ENCODE measurements at regions of chr18 and their contacts with region 1.

Region 1: GRCh38 chr18:65398347-65399075 is 352.3 kb upstream of the CDH7 start:
- DNase-seq: no peak
- ATAC-seq: no peak
- H3K4me3 ChIP-seq: no peak overlapping the region
- H3K27ac ChIP-seq: no peak overlapping the region
- H3K4me1 ChIP-seq: no peaks in the 10 kb centered on the region
- H3K27me3 ChIP-seq: no peaks in the 10 kb centered on the region
- CTCF ChIP-seq: no peak
- POLR2A ChIP-seq: no peak

Region 2: DNA sequence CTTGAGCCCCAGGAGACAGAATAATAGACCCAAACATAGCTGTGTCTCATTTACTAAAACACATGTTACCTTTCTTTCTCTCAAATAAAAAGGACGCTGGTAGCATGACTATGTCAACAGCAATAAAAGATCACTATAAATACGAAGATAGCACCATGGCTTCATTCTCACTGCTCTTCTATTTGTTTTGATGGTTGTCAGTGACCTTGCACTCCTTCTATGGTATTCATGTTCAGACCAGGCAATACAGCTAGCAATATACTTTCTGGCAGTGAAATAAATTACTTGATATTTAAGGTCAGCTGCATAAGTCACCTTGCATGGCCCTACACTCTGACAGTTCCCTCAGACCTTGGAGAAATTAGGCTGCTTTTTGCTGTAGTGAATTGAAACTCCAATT is 89.1 kb after region 1 on chr18:
- intact Hi-C with region 1: loop called in 1 of 10 experiments (anchors 5 kb)
- DNase-seq: no peak
- ATAC-seq: no peak
- H3K4me3 ChIP-seq: no peak overlapping the region
- H3K27ac ChIP-seq: no peak overlapping the region
- H3K4me1 ChIP-seq: no peaks in the 10 kb centered on the region
- H3K27me3 ChIP-seq: no peaks in the 10 kb centered on the region
- CTCF ChIP-seq: no peak
- POLR2A ChIP-seq: no peak

Measured in heart left ventricle (tissue), 16 donors.